IMR-90 (cell line): ENCODE measurements at regions of chr11 and their contacts with region 1.

Region 1: DNA sequence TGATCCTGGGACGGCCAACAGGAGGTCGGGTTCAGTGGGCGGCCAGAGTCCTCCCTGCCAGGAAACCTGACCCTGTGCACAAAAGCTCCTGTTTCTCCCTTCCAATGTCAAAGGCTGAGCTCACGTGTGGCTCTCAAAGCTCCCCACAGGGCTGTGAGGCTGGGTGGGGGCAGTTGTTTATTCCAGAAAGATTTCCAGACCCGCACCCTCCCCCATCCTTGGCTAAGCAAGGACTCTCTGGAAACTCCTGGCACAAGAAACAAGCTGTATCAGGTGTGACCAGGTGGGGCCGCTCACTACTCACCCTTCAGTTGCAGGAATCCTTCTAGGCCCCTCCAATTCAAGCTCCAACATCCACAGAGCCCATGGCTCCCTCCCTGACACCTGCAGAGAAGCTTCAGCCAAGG is 131.9 kb downstream of the SHANK2 start:
- DNase-seq: no peak
- ATAC-seq: peak; percentile 40
- H3K4me3 ChIP-seq: no peak overlapping the region
- H3K27ac ChIP-seq: no peak overlapping the region
- H3K4me1 ChIP-seq: no peaks in the 10 kb centered on the region; the same call in 1 of the 2 replicates
- H3K27me3 ChIP-seq: no peaks in the 10 kb centered on the region
- CTCF ChIP-seq: peak; percentile 24; the same call in 1 of the 2 replicates
- POLR2A ChIP-seq: no peak
- RAD21 ChIP-seq: peak; percentile 44

Region 2: GRCh38 chr11:70742553-70743291 is 377.8 kb before region 1 on chr11:
- CTCF ChIA-PET with region 1: no interaction called
- POLR2A ChIA-PET with region 1: no interaction called
- dilution Hi-C with region 1: no loop called
- in situ Hi-C with region 1: no loop called
- intact Hi-C with region 1: no loop called
- DNase-seq: no peak
- ATAC-seq: peak; percentile 58
- H3K4me3 ChIP-seq: no peak overlapping the region
- H3K27ac ChIP-seq: no peak overlapping the region
- H3K4me1 ChIP-seq: no peaks in the 10 kb centered on the region
- H3K27me3 ChIP-seq: peaks cover 4% of the 10 kb centered on the region; the same call in 1 of the 2 replicates
- CTCF ChIP-seq: no peak
- POLR2A ChIP-seq: no peak
- RAD21 ChIP-seq: no peak

Region 3: GRCh38 chr11:71372693-71373657 is 252.5 kb after region 1 on chr11:
- CTCF ChIA-PET with region 1: no interaction called
- POLR2A ChIA-PET with region 1: no interaction called
- dilution Hi-C with region 1: no loop called
- in situ Hi-C with region 1: no loop called
- intact Hi-C with region 1: loop called (anchors 10 kb)
- DNase-seq: peak; percentile 50
- ATAC-seq: peak; percentile 89
- H3K4me3 ChIP-seq: no peak overlapping the region
- H3K27ac ChIP-seq: no peak overlapping the region
- H3K4me1 ChIP-seq: no peaks in the 10 kb centered on the region
- H3K27me3 ChIP-seq: peaks cover 25% of the 10 kb centered on the region
- CTCF ChIP-seq: peak; percentile 65
- POLR2A ChIP-seq: no peak
- RAD21 ChIP-seq: peak; percentile 82

Region 4: GRCh38 chr11:71420455-71421241 is 300.2 kb after region 1 on chr11:
- CTCF ChIA-PET with region 1: no interaction called
- POLR2A ChIA-PET with region 1: no interaction called
- dilution Hi-C with region 1: no loop called
- in situ Hi-C with region 1: no loop called
- intact Hi-C with region 1: loop called (anchors 10 kb)
- DNase-seq: peak; percentile 55
- ATAC-seq: peak; percentile 74
- H3K4me3 ChIP-seq: no peak overlapping the region
- H3K27ac ChIP-seq: no peak overlapping the region
- H3K4me1 ChIP-seq: no peaks in the 10 kb centered on the region
- H3K27me3 ChIP-seq: peaks cover 23% of the 10 kb centered on the region
- CTCF ChIP-seq: peak; percentile 70
- POLR2A ChIP-seq: no peak
- RAD21 ChIP-seq: peak; percentile 82